PC-9 (cell line): ENCODE measurements at regions of chr2 and their contacts with region 1.

Region 1: GRCh38 chr2:32946314-32947075 is at the start of gene LTBP1:
- DNase-seq: peak; percentile 62 to 68
- H3K4me3 ChIP-seq: peak within 1 kb of the TSS; percentile 77
- H3K27ac ChIP-seq: no peak within 1 kb of the TSS
- H3K4me1 ChIP-seq: peaks cover 10% of the 10 kb centered on the region
- H3K27me3 ChIP-seq: no peaks in the 10 kb centered on the region
- CTCF ChIP-seq: peak; percentile 88
- total RNA-seq, gene LTBP1: 10.3 and 10.4 TPM in 2 replicates

Region 2: DNA sequence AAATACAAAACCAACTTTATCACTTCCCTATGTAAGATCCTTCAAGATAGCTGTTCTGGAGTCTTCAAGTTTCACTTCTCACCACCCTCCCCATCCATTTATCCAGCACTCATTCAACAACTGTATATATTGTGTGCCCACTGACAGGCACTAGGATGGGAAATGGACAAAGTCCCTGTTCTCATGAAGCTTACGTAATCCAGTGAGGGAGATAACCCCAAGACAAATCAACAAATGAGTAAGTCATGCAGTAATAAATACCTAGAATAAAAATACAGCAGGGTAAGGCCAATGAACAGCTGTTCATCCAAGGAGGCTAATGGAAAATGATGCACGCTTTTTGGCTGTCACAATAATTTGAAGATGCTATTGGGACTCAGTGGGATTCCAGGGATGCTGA is 1069.5 kb before region 1 on chr2:
- CTCF ChIA-PET with region 1: no interaction called
- POLR2A ChIA-PET with region 1: no interaction called
- intact Hi-C with region 1: no loop called
- DNase-seq: no peak
- H3K4me3 ChIP-seq: no peak overlapping the region
- H3K27ac ChIP-seq: no peak overlapping the region
- H3K4me1 ChIP-seq: no peaks in the 10 kb centered on the region
- H3K27me3 ChIP-seq: no peaks in the 10 kb centered on the region
- CTCF ChIP-seq: no peak

Region 3: GRCh38 chr2:32697156-32697555 is 249.3 kb before region 1 on chr2:
- CTCF ChIA-PET with region 1: interaction called, 10 read pairs
- POLR2A ChIA-PET with region 1: no interaction called
- intact Hi-C with region 1: no loop called
- DNase-seq: no peak
- H3K4me3 ChIP-seq: no peak overlapping the region
- H3K27ac ChIP-seq: no peak overlapping the region
- H3K4me1 ChIP-seq: no peaks in the 10 kb centered on the region
- H3K27me3 ChIP-seq: no peaks in the 10 kb centered on the region
- CTCF ChIP-seq: no peak

Region 4: DNA sequence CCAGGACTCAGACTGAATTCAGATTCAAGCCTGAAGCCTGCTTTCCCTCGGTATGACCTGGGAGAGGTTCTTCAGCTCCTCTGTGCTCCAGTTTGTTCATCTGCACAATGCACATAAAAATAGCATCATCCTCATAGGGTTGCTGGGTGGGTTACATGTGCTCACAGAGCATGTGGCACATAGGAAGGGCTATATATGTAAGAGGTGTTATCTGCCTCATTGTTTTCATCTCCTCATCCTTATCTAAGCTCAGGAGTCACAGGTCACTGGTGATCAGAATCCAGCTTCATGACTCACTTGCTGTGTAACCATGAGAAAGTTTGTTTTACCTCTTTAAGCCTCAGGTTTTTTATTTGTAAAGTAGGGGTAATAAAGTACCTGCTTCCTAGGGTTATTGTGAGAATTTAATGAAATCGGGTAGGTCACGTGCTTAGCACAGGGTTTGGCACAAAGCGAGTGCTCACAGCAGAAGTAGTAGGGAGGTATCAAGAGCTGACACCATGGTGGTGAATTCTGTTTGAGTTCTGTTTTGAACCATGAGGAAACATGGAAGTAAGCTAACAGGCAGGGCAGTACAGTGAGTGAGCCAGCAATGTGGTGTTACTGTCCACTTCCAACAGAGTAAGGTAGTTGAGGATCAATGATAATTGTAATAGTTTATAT is 141.3 kb before region 1 on chr2:
- CTCF ChIA-PET with region 1: no interaction called
- POLR2A ChIA-PET with region 1: no interaction called
- intact Hi-C with region 1: loop called (anchors 10 kb)
- DNase-seq: peak; percentile 16 to 91
- H3K4me3 ChIP-seq: no peak overlapping the region
- H3K27ac ChIP-seq: peak overlapping the region; percentile 84
- H3K4me1 ChIP-seq: peaks cover 36% of the 10 kb centered on the region
- H3K27me3 ChIP-seq: no peaks in the 10 kb centered on the region
- CTCF ChIP-seq: no peak

Region 5: GRCh38 chr2:32820088-32820487 is 126.4 kb before region 1 on chr2:
- CTCF ChIA-PET with region 1: no interaction called
- POLR2A ChIA-PET with region 1: no interaction called
- intact Hi-C with region 1: no loop called
- DNase-seq: no peak
- H3K4me3 ChIP-seq: no peak overlapping the region
- H3K27ac ChIP-seq: no peak overlapping the region
- H3K4me1 ChIP-seq: no peaks in the 10 kb centered on the region
- H3K27me3 ChIP-seq: no peaks in the 10 kb centered on the region
- CTCF ChIP-seq: no peak

Region 6: DNA sequence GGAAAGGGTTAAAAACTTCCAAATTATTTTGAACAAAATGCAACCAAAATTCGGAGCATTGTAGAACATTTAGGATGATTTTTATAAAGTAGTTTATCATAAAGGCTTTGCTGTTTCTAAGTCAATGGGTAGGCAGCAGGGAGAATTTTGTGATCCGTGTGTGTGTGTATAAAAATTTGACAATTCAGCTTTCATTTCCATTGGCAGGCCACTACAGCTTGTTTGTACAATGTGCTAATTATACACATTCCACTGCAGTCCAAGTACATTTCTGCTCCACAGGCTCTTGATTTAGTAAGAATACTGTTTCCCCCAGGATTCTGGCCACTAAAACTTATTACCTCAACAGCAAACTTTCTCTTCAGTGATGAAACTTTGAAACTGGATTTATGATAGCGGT is 71.6 kb before region 1 on chr2:
- CTCF ChIA-PET with region 1: no interaction called
- POLR2A ChIA-PET with region 1: no interaction called
- intact Hi-C with region 1: no loop called
- DNase-seq: no peak
- H3K4me3 ChIP-seq: no peak overlapping the region
- H3K27ac ChIP-seq: no peak overlapping the region
- H3K4me1 ChIP-seq: peaks cover 8% of the 10 kb centered on the region; the same call in 1 of the 2 replicates
- H3K27me3 ChIP-seq: no peaks in the 10 kb centered on the region
- CTCF ChIP-seq: no peak

Region 7: GRCh38 chr2:32977228-32977758 is 30.8 kb after region 1 on chr2:
- CTCF ChIA-PET with region 1: no interaction called
- POLR2A ChIA-PET with region 1: no interaction called
- intact Hi-C with region 1: loop called (anchors 2 kb)
- DNase-seq: peak; percentile 89 to 92
- H3K4me3 ChIP-seq: no peak overlapping the region
- H3K27ac ChIP-seq: no peak overlapping the region
- H3K4me1 ChIP-seq: peaks cover 20% of the 10 kb centered on the region
- H3K27me3 ChIP-seq: no peaks in the 10 kb centered on the region
- CTCF ChIP-seq: no peak

Region 8: GRCh38 chr2:33022989-33023727 is 76.7 kb after region 1 on chr2:
- CTCF ChIA-PET with region 1: no interaction called
- POLR2A ChIA-PET with region 1: no interaction called
- intact Hi-C with region 1: loop called (anchors 2 kb)
- DNase-seq: peak in 1 of 2 experiments; percentile 83
- H3K4me3 ChIP-seq: no peak overlapping the region
- H3K27ac ChIP-seq: peak overlapping the region; percentile 21
- H3K4me1 ChIP-seq: peaks cover 22% of the 10 kb centered on the region
- H3K27me3 ChIP-seq: no peaks in the 10 kb centered on the region
- CTCF ChIP-seq: no peak

Region 9: GRCh38 chr2:33069894-33070651 is 123.6 kb after region 1 on chr2:
- CTCF ChIA-PET with region 1: no interaction called
- POLR2A ChIA-PET with region 1: no interaction called
- intact Hi-C with region 1: loop called (anchors 2 kb)
- DNase-seq: peak; percentile 76 to 98
- H3K4me3 ChIP-seq: peak overlapping the region; percentile 41
- H3K27ac ChIP-seq: peak overlapping the region; percentile 94
- H3K4me1 ChIP-seq: peaks cover 59% of the 10 kb centered on the region
- H3K27me3 ChIP-seq: no peaks in the 10 kb centered on the region
- CTCF ChIP-seq: no peak

Region 10: GRCh38 chr2:33583194-33583938 is 636.9 kb after region 1 on chr2:
- CTCF ChIA-PET with region 1: no interaction called
- POLR2A ChIA-PET with region 1: no interaction called
- intact Hi-C with region 1: loop called (anchors 10 kb)
- DNase-seq: peak in 1 of 2 experiments; percentile 34
- H3K4me3 ChIP-seq: no peak overlapping the region
- H3K27ac ChIP-seq: no peak overlapping the region
- H3K4me1 ChIP-seq: no peaks in the 10 kb centered on the region
- H3K27me3 ChIP-seq: no peaks in the 10 kb centered on the region
- CTCF ChIP-seq: peak; percentile 91